ENCODE measurements at regions of chr3 and their contacts with region 1.

Region 1: DNA sequence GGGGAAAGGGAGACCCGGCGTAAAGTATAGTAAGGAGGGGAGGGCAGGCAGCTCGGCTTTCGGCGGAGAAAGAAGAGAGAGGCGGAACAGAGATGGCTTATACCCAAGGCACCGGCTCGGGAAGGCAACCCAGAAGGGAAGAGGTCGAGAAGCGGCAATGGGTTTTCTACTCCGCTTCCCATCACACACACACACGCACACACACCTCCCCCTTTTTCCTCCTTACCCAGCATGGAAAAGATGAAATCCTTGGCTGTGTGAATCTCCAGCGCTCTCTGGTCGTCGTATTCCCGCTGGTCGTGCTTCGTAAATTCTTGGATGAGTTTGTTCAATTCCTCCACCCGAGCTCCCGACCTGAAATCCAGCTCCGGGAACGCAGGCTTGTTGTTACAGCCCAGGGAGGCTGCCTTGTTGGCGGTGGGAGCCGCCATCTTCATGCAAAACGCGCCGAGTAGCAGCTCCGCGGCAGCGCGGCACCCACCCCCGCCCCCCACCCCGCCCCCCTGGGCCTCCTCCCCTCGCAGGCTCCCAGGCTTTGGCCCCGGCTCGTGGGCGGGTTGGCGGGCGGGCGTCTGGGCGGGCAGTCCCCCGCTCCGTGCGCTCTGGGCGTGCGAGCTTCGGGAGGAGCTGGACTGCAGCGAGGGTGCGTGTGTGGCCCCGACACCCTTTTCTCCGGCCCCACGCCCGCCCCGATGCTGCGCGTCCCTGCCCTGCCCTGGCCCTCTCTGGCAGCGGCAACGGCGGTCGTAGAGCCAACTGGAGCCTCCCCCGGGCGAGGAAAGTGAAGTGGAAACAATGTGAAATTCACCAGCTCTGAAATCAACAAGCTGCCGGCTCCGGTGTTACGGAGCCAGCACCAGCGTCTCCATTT is at the start of gene MB21D2:
- DNase-seq: peak; percentile 51 to 95 (median 69)

Region 2: DNA sequence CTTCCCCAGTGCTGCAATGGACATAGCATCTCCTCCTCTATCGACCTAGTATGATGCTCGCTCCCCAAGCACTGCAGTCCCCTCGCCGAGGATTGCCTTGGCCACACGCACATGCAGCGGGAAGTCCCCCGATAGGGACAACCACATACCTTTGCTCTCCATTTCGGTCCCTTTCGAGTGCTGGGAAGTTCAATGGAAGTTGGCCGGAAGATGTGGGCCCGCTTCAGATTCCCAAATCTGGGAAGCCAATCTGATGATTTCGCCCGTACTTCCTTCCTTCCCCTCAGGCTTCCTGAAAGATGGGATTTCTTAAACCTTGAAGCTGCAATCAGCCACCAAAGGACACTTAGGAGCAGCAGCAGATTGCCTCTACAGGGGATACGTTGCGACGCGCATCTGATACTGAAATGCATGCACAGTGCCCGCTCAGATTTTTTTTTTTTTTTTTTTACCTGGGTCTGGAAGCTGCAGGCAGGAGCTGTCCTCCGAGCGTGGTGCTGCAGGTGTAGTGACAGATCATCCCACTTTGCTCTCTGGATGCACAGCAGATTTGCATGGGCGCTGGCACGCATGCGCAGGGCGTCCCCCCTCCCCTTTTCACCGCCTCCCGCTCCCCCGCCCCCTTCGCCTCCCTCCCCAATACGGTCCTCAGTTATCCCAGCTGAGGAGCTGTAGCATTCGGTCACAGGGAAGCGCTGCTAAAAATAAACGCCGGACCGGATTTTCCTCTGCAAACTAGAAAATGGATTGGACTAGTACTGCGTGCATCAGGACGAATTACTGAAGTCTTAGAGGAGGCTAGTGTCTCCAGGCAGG is 190.4 kb before region 1 on chr3 and contains the start of gene FGF12:
- intact Hi-C with region 1: loop called (anchors 10 kb)
- DNase-seq: peak; percentile 69 to 97 (median 86)

Region 3: DNA sequence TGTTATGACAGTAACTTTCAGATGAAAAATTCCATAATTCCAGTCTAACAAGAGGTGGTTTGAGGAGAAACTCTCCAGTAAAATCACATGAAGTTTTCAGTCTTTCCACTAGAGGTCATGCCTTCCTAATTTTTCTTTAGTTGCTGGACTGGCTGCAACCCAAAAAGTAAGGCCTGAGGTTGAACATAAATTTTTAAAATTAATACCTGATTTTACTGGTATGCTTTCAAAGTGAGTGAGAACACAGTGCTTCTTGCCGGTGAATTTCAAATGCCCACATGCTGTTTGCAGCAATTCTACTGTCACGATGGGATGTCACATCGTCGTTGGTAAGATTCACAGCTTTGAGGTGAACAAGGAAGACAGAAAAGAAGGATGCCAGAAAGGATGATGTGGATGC is 101.3 kb before region 1 on chr3:
- intact Hi-C with region 1: loop called (anchors 2 kb)
- DNase-seq: no peak

Region 4: DNA sequence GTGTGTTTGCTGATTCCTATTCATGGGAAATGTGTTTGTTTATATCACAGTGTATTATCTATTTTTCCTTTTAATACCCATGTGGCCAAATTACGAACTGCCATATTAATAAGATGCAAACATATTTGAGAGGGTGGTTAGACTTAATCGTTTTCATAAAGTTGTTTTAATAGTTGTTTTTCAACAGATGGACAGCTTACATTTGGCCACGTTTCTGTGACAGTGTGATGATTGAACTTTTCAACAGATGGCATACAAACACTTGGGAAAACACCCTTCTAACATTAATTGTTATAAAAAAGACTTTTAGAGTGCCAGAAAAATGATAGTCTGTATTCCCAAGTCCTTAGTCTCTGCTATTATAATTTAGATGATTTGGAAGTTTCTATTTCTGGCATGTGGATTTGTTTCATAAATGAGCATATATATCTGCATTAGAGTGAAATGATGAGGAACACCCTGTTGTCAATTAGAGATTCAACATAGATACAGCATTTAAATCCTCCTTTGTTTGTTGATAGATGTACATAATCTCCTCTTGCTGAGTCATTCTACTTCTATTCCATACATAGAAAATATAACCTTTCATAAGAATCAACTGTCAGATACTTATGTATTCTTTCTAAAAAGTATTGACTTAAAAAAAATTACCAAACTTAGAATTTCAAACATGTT is 336.5 kb after region 1 on chr3:
- intact Hi-C with region 1: no loop called
- DNase-seq: no peak

Region 5: DNA sequence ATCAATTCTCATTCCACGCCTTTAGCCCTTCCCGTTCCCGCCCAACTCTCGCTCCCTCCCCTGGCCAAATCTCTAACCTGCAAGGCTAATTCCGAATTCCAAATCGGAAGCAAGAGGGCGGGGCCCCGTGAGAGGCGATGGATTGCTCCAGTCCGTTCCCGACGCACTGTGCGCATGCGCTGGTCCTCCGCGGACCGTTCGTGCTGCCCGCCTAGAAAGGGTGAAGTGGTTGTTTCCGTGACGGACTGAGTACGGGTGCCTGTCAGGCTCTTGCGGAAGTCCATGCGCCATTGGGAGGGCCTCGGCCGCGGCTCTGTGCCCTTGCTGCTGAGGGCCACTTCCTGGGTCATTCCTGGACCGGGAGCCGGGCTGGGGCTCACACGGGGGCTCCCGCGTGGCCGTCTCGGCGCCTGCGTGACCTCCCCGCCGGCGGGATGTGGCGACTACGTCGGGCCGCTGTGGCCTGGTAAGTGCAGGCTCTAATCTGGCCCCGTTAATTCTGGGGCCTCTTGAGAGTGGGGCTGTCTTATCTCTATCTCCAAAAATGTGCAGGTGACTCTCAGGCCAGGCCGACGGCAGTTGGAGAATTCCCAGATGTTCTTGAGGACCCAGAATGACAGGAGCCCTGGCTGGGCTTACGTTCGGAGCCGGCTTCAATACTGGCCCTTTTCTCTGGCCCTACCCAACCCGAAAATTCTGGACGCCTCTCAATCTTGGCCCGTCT is 675.5 kb after region 1 on chr3 and contains the start of gene OPA1:
- intact Hi-C with region 1: loop called (anchors 5 kb)
- DNase-seq: peak; percentile 94 to 99 (median 96)